ENCODE measurements at regions of chr22 and their contacts with region 1.

Region 1: GRCh38 chr22:41940832-41941765 is 5.9 kb downstream of the CENPM start:
- DNase-seq: peak; percentile 91
- ATAC-seq: peak; percentile 63
- H3K4me3 Mint-ChIP-seq: peak overlapping the region; percentile 78
- H3K27ac Mint-ChIP-seq: peak overlapping the region; percentile 99
- H3K4me1 Mint-ChIP-seq: peaks cover 70% of the 10 kb centered on the region
- H3K27me3 Mint-ChIP-seq: no peaks in the 10 kb centered on the region

Region 2: GRCh38 chr22:41448189-41448808 is 492.8 kb before region 1 on chr22:
- CTCF ChIA-PET with region 1: no interaction called
- POLR2A ChIA-PET with region 1: no interaction called
- intact Hi-C with region 1: loop called in 1 of 2 experiments (anchors 5 kb)
- DNase-seq: peak; percentile 95
- ATAC-seq: peak; percentile 73
- H3K4me3 Mint-ChIP-seq: peak overlapping the region; percentile 86
- H3K27ac Mint-ChIP-seq: peak overlapping the region; percentile 97
- H3K4me1 Mint-ChIP-seq: peaks cover 8% of the 10 kb centered on the region
- H3K27me3 Mint-ChIP-seq: no peaks in the 10 kb centered on the region

Region 3: DNA sequence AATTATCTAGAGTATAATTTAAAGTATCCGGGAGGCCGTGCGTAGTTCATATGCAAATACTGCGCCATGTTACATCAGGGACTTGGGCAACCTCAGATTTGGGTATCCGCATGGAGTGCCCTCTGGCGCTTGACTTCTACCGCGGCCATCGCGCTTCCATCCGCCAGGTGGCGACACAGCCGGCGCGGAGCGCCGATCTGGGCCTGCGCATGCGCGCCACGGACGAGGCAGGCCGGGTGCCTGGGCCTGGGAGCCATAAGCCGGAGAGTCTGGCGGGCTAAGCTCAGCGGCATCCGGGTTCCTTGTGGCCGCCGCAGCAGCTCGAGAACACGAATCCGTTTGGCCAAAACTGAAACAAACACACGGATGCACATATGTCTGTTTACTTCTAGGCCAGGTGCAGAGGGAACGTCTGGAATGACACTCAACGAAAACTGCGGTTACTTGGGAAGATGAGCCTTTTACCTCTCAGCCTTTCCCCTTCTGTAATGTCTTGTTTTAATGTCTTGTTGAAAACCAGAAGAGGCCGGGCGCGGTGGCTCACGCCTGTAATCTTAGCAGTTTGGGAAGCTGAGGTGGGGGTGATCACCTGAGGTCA is 274.3 kb before region 1 on chr22:
- CTCF ChIA-PET with region 1: interaction called, 9 read pairs
- POLR2A ChIA-PET with region 1: no interaction called
- intact Hi-C with region 1: loop called in 1 of 2 experiments (anchors 1 kb)
- DNase-seq: peak; percentile 96
- ATAC-seq: peak; percentile 94
- H3K4me3 Mint-ChIP-seq: peak overlapping the region; percentile 76
- H3K27ac Mint-ChIP-seq: peak overlapping the region; percentile 95
- H3K4me1 Mint-ChIP-seq: peaks cover 13% of the 10 kb centered on the region
- H3K27me3 Mint-ChIP-seq: no peaks in the 10 kb centered on the region

Region 4: DNA sequence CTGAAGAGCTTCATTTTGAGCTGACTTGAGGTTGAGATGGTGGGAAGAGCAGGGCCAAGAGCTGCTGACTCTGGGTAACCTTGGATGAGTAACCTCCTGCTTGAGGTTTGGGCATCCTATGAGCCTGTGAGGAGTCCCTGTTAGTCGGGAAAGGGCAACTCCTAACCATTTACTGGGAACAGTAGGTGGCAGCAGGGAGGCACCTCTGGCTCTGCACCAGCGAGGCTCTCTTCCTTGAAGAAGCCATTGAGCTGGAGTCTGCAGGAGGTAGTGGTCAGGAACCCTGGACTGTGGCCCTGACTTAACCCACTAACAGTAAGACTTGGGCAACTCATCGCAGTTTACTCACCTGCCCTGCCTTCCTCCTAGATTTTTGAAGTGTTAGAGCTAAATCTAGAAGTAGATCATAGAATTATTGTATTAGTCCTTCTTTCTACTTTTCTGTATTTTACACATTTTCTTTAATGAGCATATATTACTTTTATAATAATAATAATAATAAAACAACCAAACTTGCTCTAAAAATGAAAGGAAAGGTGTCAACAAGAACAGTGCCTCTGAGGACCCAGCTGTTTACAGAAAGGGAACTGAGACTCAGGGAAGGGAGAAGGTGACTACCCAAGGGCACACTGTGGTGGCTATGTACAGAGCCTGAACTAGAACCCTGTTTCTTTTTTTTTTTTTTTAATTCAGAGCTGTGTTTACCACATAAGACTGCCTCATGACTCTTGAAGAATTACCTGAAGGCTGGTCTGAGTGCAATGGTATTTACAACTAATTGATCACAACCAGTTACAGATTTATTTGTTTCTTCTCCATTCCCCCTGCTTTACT is 194.3 kb before region 1 on chr22:
- CTCF ChIA-PET with region 1: interaction called, 11 read pairs
- POLR2A ChIA-PET with region 1: no interaction called
- intact Hi-C with region 1: loop called (anchors 1 kb)
- DNase-seq: peak; percentile 74
- ATAC-seq: peak; percentile 98
- H3K4me3 Mint-ChIP-seq: no peak overlapping the region
- H3K27ac Mint-ChIP-seq: no peak overlapping the region
- H3K4me1 Mint-ChIP-seq: peaks cover 3% of the 10 kb centered on the region
- H3K27me3 Mint-ChIP-seq: peaks cover 6% of the 10 kb centered on the region

Region 5: GRCh38 chr22:41822317-41823060 is 118.6 kb before region 1 on chr22:
- CTCF ChIA-PET with region 1: interaction called, 8 read pairs
- POLR2A ChIA-PET with region 1: interaction called, 3 read pairs
- intact Hi-C with region 1: loop called (anchors 1 kb)
- DNase-seq: peak; percentile 57
- ATAC-seq: peak; percentile 97
- H3K4me3 Mint-ChIP-seq: no peak overlapping the region
- H3K27ac Mint-ChIP-seq: peak overlapping the region; percentile 87
- H3K4me1 Mint-ChIP-seq: peaks cover 36% of the 10 kb centered on the region
- H3K27me3 Mint-ChIP-seq: no peaks in the 10 kb centered on the region

Region 6: DNA sequence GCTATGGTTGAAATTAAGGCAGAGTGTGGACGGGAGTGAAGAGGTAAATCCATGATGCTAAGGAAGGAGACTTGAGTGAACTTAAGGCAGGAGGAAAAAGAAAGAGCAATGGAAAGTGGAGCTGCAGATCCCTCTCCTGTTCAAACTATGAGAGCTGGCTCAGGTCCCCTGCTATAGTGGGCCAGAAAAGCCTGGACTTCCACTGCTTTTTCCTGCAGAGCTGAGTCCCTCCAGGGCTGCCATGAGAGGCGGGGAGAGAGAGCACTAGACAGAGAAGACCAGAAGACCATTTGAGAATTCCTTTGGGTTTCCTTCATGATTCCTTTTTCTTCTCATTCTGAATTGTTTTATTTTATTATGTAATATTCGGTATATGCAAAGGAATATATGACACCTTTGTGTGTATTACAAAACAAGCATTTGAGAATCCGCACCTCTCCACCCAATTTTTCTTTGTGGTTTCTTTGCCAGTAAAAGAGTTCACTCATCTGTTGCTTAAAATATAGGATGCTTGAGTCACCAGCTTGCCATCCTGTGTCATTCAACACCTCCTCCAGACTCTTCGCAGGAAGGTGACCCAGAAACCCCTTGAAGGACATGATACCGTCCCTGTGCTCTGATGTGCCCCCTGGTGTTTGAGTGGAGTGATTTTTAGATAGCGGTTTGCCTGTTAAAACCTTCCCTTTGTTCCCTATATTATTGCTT is 83.8 kb before region 1 on chr22:
- CTCF ChIA-PET with region 1: interaction called, 20 read pairs
- POLR2A ChIA-PET with region 1: interaction called, 32 read pairs
- intact Hi-C with region 1: loop called (anchors 1 kb)
- DNase-seq: peak; percentile 89
- ATAC-seq: peak; percentile 71
- H3K4me3 Mint-ChIP-seq: no peak overlapping the region
- H3K27ac Mint-ChIP-seq: peak overlapping the region; percentile 95
- H3K4me1 Mint-ChIP-seq: peaks cover 76% of the 10 kb centered on the region
- H3K27me3 Mint-ChIP-seq: no peaks in the 10 kb centered on the region

Region 7: DNA sequence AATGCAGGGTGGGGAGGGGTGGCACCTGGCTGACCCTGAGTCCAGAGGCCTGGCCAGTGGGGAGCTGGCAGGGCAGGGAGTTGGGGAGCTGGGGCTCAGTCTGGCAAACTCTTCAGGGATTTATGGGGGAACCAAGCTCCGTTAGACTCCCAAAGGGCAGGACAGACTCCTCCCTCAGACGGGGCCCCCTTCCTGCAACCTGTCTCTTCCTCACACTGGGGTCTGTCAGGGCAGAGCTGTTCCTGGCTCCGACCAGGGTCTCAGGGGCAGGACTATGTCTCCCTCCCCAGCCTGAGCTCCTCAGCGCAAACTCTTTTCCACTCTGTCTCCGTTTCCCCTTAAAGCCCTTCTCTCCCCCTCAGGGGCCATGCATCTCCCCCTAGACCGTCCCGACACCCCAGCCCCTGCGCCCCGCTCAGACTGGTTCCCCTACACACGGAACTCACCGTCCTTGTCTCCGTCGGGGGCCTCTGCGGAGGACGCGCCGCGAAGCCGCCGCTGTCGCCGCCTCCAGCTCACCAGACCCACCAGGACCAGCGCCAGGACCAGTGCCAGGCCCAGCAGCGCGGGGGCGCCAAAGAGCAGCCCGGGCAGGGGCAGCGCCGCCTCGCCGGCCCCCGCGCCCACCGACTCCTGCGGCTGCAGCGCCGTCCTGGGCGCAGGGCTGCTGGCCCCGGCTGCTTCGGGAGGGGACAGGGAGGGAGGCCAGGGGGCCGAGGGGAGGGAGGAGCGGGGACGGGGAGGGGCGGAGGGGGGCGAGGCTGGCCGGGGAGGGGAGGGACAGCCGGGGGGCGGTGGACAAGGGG is 15.2 kb before region 1 on chr22:
- CTCF ChIA-PET with region 1: interaction called, 17 read pairs
- POLR2A ChIA-PET with region 1: interaction called, 18 read pairs
- intact Hi-C with region 1: loop called in 1 of 2 experiments (anchors 2 kb)
- DNase-seq: peak; percentile 88
- ATAC-seq: peak; percentile 87
- H3K4me3 Mint-ChIP-seq: peak overlapping the region; percentile 66
- H3K27ac Mint-ChIP-seq: peak overlapping the region; percentile 58
- H3K4me1 Mint-ChIP-seq: peaks cover 14% of the 10 kb centered on the region
- H3K27me3 Mint-ChIP-seq: peaks cover 5% of the 10 kb centered on the region

Measured in activated CD4-positive, alpha-beta T cell treated with anti-CD3 and anti-CD28 coated beads for 36 hours (primary cell).